B cell (primary cell): ENCODE measurements at regions of chr1 and their contacts with region 1.

Region 1: DNA sequence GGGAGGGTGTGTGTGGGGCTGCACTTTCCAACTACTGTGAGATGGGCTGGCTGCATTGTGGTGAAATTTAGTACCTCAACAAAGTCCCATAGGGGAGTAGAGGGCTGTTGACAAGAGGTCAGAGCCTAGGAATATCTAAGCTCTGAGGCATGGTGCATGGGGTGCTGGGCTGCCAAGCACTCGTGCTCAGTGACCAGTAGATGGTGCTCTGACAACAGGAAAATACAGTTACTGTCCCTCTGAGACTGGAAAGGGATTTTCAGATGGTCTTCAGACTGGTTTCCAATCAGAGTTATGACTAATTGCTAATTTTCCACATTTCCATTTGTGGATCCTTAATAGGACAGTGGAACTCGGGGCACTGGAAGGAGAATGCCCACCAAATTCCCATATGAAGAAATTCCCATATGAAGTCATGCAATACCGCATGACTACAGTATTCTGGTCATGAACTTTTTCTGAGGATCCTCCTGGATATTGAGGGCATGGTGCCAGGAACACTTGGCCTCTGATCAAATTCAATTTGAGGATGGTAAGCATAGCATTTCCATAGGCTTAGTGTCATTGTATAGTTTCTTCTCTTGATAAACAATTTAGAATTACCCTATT is 4.1 kb upstream of the CACNA1E start:
- DNase-seq: peak; percentile 64
- ATAC-seq: peak; percentile 60
- H3K4me3 ChIP-seq: no peak overlapping the region
- H3K4me3 Mint-ChIP-seq: no peak overlapping the region
- H3K27ac ChIP-seq: no peak overlapping the region
- H3K27ac Mint-ChIP-seq: no peak overlapping the region
- H3K4me1 ChIP-seq: peaks cover 8 to 11% of the 10 kb centered on the region in 2 donors
- H3K4me1 Mint-ChIP-seq: peaks cover 12% of the 10 kb centered on the region
- H3K27me3 ChIP-seq: peaks cover 0 to 32% (median 11%) of the 10 kb centered on the region in 4 experiments
- H3K27me3 Mint-ChIP-seq: peaks cover 37% of the 10 kb centered on the region
- CTCF ChIP-seq: peak; percentile 77

Region 2: GRCh38 chr1:181676269-181676668 is 197.0 kb after region 1 on chr1:
- CTCF ChIA-PET with region 1: interaction called, 64 read pairs
- POLR2A ChIA-PET with region 1: no interaction called
- intact Hi-C with region 1: no loop called
- DNase-seq: peak; percentile 44
- ATAC-seq: no peak
- H3K4me3 ChIP-seq: no peak overlapping the region
- H3K4me3 Mint-ChIP-seq: no peak overlapping the region
- H3K27ac ChIP-seq: no peak overlapping the region
- H3K27ac Mint-ChIP-seq: no peak overlapping the region
- H3K4me1 ChIP-seq: no peaks in the 10 kb centered on the region
- H3K4me1 Mint-ChIP-seq: no peaks in the 10 kb centered on the region
- H3K27me3 ChIP-seq: no peaks in the 10 kb centered on the region
- H3K27me3 Mint-ChIP-seq: peaks cover 43% of the 10 kb centered on the region
- CTCF ChIP-seq: peak; percentile 49

Region 3: GRCh38 chr1:181936768-181937581 is 457.7 kb after region 1 on chr1:
- CTCF ChIA-PET with region 1: interaction called, 20 read pairs
- POLR2A ChIA-PET with region 1: no interaction called
- intact Hi-C with region 1: no loop called
- DNase-seq: peak; percentile 44
- ATAC-seq: peak; percentile 39
- H3K4me3 ChIP-seq: no peak overlapping the region
- H3K4me3 Mint-ChIP-seq: no peak overlapping the region
- H3K27ac ChIP-seq: no peak overlapping the region
- H3K27ac Mint-ChIP-seq: no peak overlapping the region
- H3K4me1 ChIP-seq: no peaks in the 10 kb centered on the region
- H3K4me1 Mint-ChIP-seq: no peaks in the 10 kb centered on the region
- H3K27me3 ChIP-seq: peaks cover 0 to 1% (median 0%) of the 10 kb centered on the region in 4 experiments
- H3K27me3 Mint-ChIP-seq: peaks cover 3% of the 10 kb centered on the region
- CTCF ChIP-seq: peak; percentile 28

Region 4: DNA sequence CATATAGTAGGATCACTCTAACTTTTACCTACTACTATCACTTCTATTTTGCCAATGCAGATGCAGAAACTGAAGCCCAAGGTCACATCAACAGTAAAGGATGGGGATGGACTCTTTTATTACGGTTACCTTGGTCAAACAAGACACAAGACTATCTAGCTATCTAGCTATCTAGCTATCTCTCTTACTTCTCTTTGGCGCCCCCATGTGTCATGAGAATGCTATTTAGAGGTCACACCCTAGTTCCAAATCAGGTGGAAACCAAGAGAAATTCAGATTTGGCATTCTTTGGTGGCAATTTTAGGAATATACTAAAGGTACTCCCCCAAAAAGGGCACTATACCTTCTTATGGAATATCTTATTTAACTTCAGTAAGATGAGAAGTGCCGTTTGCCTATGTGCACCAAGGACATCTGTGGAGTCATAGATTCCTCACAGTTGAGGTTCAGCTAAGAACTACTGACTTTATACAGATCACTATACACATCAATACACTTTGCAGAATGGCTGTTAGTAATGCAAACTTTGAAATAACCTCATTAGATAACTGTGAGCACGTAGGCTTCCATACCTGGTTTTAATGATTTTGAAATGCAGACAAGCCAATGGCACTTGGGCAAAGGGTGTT is 575.6 kb after region 1 on chr1:
- CTCF ChIA-PET with region 1: interaction called, 82 read pairs
- POLR2A ChIA-PET with region 1: no interaction called
- intact Hi-C with region 1: no loop called
- DNase-seq: peak; percentile 57
- ATAC-seq: no peak
- H3K4me3 ChIP-seq: no peak overlapping the region
- H3K4me3 Mint-ChIP-seq: no peak overlapping the region
- H3K27ac ChIP-seq: no peak overlapping the region
- H3K27ac Mint-ChIP-seq: no peak overlapping the region
- H3K4me1 ChIP-seq: no peaks in the 10 kb centered on the region
- H3K4me1 Mint-ChIP-seq: no peaks in the 10 kb centered on the region
- H3K27me3 ChIP-seq: peaks cover 0 to 27% (median 7%) of the 10 kb centered on the region in 4 experiments
- H3K27me3 Mint-ChIP-seq: peaks cover 26% of the 10 kb centered on the region
- CTCF ChIP-seq: peak; percentile 80

Region 5: DNA sequence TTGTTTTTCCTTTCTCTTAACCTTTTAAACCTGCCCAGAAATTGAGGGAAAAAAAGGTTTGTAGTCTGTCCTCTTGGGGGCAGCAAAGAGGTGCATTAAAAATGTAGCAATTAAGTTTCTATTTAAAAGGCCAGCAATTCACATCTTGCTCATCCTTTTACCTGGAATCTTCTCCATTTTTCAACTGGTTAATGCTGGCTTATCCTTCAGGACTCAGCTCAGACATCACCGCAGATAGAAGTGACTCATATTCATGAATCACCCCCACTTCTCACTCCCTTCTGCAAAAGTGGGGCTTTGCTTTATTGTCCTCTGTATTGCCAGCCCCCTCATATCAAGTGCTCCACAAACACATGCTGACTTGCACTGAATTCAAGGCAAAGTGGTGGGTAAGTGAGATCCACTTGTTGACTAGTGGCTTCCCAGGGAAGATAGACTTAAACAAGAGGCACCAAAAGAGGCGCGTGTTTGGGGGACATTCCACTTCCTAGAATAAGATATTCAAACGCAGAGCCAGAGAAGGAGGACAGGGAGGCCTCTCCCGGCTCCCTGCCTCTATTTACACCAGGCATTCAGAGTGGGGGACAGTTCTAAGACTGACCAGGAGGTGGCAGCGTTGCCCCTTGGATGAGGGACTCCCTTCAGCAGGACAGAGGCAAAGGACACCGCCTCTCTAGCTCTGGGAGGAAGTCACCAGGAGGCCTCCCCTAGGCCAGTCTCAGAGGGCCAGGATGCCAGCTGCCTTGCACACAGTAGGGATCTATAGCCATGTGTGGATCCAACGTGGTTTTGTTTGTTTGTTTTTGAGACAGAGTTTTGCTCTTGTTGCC is 605.5 kb after region 1 on chr1:
- CTCF ChIA-PET with region 1: interaction called, 38 read pairs
- POLR2A ChIA-PET with region 1: no interaction called
- intact Hi-C with region 1: no loop called
- DNase-seq: peak; percentile 53
- ATAC-seq: peak; percentile 64
- H3K4me3 ChIP-seq: no peak overlapping the region
- H3K4me3 Mint-ChIP-seq: no peak overlapping the region
- H3K27ac ChIP-seq: no peak overlapping the region
- H3K27ac Mint-ChIP-seq: no peak overlapping the region
- H3K4me1 ChIP-seq: peaks cover 0 to 5% of the 10 kb centered on the region in 2 donors
- H3K4me1 Mint-ChIP-seq: peaks cover 5% of the 10 kb centered on the region
- H3K27me3 ChIP-seq: no peaks in the 10 kb centered on the region
- H3K27me3 Mint-ChIP-seq: no peaks in the 10 kb centered on the region
- CTCF ChIP-seq: peak; percentile 59